ENCODE measurements at regions of chr1 and their contacts with region 1.

Region 1: GRCh38 chr1:235866913-235867845 is 473 bp upstream of the LYST start:
- DNase-seq: peak; percentile 98
- H3K4me3 Mint-ChIP-seq: peak overlapping the region; percentile 91
- H3K27ac Mint-ChIP-seq: peak overlapping the region; percentile 94
- H3K4me1 Mint-ChIP-seq: peaks cover 45% of the 10 kb centered on the region
- H3K27me3 Mint-ChIP-seq: no peaks in the 10 kb centered on the region

Region 2: DNA sequence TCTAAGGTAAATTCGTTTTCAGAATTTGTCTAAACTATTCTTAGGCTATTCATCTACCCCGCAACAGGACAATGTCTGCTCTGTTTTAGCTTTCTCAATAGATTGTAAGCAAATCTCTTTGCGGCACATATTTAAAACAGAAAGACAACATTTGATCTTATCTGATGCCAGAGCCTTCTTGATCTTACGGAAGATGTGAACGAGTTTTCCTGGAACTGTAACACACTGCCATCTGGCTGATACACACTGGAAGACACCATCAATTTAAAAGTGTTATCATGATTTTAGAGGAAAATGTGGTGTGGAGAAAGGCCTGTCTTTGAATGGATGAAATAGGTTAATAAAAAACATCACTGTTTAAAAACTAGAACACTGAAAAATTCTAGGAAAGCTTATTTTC is 1457.9 kb before region 1 on chr1:
- CTCF ChIA-PET with region 1: no interaction called
- intact Hi-C with region 1: loop called (anchors 5 kb)
- DNase-seq: peak; percentile 47
- H3K4me3 Mint-ChIP-seq: peak overlapping the region; percentile 61
- H3K27ac Mint-ChIP-seq: peak overlapping the region; percentile 95
- H3K4me1 Mint-ChIP-seq: peaks cover 42% of the 10 kb centered on the region
- H3K27me3 Mint-ChIP-seq: no peaks in the 10 kb centered on the region

Region 3: DNA sequence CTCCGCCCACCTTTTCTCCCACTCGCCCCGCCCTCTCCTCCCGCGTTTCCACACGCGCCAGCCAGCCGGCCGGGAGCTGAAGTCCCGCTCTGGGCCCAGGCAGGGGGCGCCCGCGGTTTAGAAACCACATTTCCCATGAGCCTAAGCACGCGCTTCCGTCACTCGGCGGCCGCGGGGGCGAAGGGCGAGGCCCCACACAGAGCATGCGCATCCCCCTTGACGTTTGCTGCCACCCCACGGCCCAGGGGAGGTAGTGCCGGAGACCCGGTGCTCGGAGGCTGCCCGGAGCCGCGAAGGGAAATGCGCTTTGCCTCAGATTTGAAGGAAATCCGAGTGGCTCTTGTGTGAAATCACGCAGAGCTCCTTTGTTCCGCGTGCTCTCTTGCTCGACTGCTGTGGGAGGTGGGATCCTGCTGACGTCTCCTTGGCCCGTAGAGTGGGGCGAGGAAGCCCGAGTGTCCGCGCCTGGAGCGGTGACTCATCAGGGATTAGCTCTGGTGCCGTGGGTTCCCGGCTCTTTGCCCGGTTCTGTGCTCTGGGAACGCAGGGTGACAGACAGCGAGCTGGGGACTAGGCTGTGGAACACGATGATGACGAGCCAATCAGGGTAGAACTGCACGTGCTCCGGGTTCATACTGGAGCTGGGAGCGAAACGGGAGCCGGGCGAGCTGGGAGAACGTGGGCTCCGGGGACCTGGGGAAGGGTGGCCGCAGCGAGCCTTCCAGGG is 362.5 kb before region 1 on chr1:
- CTCF ChIA-PET with region 1: interaction called, 4 read pairs
- intact Hi-C with region 1: loop called (anchors 1 kb)
- DNase-seq: peak; percentile 99
- H3K4me3 Mint-ChIP-seq: peak overlapping the region; percentile 97
- H3K27ac Mint-ChIP-seq: peak overlapping the region; percentile 97
- H3K4me1 Mint-ChIP-seq: peaks cover 31% of the 10 kb centered on the region
- H3K27me3 Mint-ChIP-seq: no peaks in the 10 kb centered on the region

Region 4: DNA sequence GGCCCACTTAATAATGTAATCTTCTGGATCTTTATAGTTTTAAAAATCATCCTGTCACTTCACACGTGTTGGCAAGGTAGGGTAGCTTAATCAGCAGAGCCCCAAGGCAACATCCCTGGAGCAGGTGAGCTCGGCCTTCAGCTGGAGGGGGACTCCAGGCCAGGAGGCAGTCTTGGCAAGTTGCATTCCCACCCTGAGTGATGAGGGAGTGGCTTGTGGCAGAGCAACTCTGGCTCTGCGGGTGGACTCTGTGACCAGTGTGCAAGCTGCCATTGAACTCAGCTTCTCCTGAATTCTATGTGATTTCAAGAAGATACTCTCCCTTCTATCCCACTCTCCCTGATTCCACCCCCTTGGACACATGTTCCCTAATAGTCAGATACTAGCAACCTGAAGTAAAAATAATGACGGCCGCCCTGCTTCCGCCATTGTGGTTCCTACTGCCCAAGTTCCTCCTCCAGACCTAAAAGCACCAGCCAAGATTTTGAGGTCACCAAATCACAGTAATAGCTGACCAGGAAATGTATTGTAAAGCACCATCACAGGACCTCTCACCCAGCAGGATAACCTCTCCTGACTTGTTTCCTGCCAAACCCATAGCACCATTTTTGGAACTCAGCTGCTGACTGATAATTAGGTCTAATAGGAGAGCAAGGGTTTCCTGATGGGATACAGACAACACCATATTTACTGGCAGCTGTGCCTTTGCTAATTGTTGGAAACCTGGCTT is 11.1 kb after region 1 on chr1:
- CTCF ChIA-PET with region 1: interaction called, 12 read pairs
- intact Hi-C with region 1: loop called (anchors 1 kb)
- DNase-seq: no peak
- H3K4me3 Mint-ChIP-seq: no peak overlapping the region
- H3K27ac Mint-ChIP-seq: no peak overlapping the region
- H3K4me1 Mint-ChIP-seq: peaks cover 56% of the 10 kb centered on the region
- H3K27me3 Mint-ChIP-seq: no peaks in the 10 kb centered on the region

Region 5: DNA sequence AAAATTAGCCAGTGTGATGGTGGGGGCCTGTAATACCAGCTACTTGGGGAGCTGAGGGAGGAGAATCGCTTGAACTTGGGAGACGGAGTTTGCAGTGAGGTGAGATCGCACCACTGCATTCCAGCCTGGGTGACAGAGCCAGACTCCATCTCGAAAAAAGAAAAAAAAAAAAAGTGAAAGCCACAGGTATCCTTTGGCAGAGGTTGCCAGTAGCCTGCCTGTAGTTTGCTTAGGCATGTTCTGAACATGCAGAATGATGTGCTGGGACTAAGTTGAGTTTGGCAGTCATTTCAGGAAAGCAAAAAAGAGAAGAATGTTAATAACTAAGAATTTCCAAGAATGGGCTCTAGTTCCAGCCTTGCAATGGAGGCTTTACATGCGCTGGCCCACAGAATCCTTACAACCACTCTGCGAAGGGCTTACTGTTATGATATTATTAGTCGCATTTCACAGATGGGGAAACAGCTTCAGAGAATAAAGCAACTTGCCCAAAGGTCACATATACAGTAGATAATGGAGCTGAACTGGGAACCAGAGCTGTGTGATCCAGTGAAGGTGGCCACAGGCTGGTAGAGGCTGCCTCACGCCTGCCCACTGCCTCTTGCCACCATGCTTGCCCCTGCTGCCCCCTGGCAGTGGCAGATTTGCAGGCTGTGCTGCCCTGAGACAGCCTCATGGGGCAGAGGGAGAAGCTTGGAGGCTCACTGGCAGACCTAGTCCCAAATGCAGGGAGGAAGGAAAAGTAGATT is 66.0 kb after region 1 on chr1:
- CTCF ChIA-PET with region 1: no interaction called
- intact Hi-C with region 1: no loop called
- DNase-seq: no peak
- H3K4me3 Mint-ChIP-seq: no peak overlapping the region
- H3K27ac Mint-ChIP-seq: no peak overlapping the region
- H3K4me1 Mint-ChIP-seq: peaks cover 24% of the 10 kb centered on the region
- H3K27me3 Mint-ChIP-seq: peaks cover 3% of the 10 kb centered on the region

Region 6: GRCh38 chr1:235952950-235953615 is 85.9 kb after region 1 on chr1:
- CTCF ChIA-PET with region 1: interaction called, 4 read pairs
- intact Hi-C with region 1: loop called (anchors 1 kb)
- DNase-seq: peak; percentile 60
- H3K4me3 Mint-ChIP-seq: no peak overlapping the region
- H3K27ac Mint-ChIP-seq: no peak overlapping the region
- H3K4me1 Mint-ChIP-seq: peaks cover 38% of the 10 kb centered on the region
- H3K27me3 Mint-ChIP-seq: no peaks in the 10 kb centered on the region

Region 7: DNA sequence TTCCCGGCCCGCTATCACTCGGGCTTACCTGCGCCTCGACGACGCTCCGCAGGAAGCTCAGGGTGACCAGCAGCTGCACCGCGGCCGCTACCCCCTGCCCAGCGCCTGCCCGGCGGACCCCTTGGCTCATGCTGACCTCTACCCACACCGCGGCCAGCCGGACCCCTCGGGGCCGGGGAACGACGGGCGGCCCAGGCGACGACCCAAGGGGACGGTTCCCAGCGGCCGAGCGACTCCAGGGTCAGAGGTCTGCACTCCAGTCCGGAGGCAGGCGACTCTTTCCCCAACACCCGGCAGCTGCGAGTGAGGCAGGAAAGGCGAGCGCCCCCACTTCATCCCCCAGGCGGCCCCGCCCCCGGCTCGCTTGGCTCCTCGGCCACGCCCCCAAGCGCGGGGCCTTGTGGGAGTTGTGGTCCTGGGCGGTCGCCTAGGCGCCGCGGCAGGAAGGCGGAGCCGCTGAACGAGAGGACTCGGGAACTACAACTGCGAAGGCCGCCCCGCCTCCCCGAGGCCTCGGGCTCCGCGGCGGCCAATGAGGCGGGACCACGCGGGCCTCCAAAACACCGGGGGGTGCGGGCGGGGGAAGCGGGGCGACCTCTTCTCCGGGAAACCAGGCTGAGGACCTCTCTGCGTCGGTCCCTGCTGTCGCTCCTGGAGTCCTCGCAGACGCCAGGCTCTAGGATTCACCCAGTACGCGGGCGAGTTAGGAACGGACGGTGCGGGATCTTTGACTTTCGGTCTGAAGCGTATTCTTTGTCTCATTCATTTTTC is 414.7 kb after region 1 on chr1 and contains the start of gene ERO1B:
- CTCF ChIA-PET with region 1: no interaction called
- intact Hi-C with region 1: loop called (anchors 2 kb)
- DNase-seq: peak; percentile 95
- H3K4me3 Mint-ChIP-seq: peak within 1 kb of the TSS; percentile 91
- H3K27ac Mint-ChIP-seq: peak within 1 kb of the TSS; percentile 66
- H3K4me1 Mint-ChIP-seq: peaks cover 41% of the 10 kb centered on the region
- H3K27me3 Mint-ChIP-seq: no peaks in the 10 kb centered on the region
- total RNA-seq, gene ERO1B: 1.6 to 2.5 TPM

Region 8: DNA sequence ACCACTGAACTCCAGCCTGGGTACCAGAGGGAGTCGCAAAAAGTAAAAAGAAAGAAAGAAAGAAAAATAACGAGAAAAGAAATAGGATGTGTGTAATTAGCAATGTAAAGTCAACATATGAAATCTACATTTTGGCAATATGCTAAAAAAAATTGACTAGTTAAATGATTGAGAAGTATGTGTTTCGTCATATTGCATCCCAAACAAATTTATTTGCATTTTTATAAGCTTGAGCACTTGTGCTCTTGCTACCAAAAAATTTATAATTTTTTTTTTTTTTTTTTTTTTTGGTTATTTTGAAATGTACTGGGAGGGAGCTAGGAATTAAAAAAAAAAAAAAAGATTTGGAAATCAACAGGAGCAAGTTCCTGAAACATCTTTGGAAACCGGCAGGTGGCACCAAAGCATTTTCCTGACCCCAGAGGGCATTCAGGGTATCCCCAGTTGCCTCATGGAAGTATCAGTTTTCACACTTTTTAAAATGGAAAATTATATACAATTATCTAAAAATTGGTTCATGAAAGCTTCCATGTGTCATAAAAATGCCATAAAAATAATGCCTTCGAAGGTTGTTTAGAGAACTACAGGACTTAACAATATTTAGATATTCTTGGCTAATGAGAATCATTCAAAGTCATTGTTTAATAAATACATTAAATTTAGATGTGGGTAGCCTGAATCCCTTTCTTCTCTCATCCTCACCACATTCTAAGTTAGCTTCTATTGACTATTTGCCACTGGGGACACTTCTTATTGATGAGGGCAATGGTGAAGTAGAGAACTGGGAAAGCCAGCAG is 741.9 kb after region 1 on chr1:
- CTCF ChIA-PET with region 1: no interaction called
- intact Hi-C with region 1: no loop called
- DNase-seq: peak; percentile 54
- H3K4me3 Mint-ChIP-seq: no peak overlapping the region
- H3K27ac Mint-ChIP-seq: no peak overlapping the region
- H3K4me1 Mint-ChIP-seq: no peaks in the 10 kb centered on the region
- H3K27me3 Mint-ChIP-seq: peaks cover 23% of the 10 kb centered on the region